PC-3 (cell line): ENCODE measurements at regions of chr14 and their contacts with region 1.

Region 1: GRCh38 chr14:71711619-71712018 is 220.6 kb upstream of the RGS6 start:
- DNase-seq: peak; percentile 62
- ATAC-seq: peak; percentile 90
- H3K4me3 ChIP-seq: no peak overlapping the region
- H3K27ac ChIP-seq: no peak overlapping the region
- H3K4me1 ChIP-seq: peaks cover 20% of the 10 kb centered on the region
- H3K27me3 ChIP-seq: no peaks in the 10 kb centered on the region
- CTCF ChIP-seq: no peak

Region 2: DNA sequence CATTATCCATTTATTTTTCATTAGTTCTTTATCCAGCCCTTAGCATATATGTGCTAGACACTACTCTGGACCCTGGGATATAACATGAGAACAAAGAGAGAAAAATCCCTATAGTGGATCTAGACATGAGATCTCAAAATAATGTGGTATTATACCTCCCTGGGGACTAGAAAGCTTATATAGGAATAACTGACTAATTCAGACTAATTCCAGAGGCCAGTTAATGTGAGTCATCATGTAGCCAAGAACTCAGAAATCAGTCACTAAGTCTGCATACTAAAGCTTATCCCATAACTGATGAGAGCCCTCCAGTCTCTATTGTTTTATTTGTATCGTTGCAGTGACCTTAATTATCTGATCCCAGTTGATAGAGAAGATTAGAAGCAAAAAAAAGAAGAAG is 46.5 kb before region 1 on chr14:
- CTCF ChIA-PET with region 1: no interaction called
- POLR2A ChIA-PET with region 1: interaction called, 14 read pairs
- intact Hi-C with region 1: no loop called
- DNase-seq: peak; percentile 66
- ATAC-seq: peak; percentile 98
- H3K4me3 ChIP-seq: no peak overlapping the region
- H3K27ac ChIP-seq: no peak overlapping the region; the same call in 1 of the 2 replicates
- H3K4me1 ChIP-seq: peaks cover 13% of the 10 kb centered on the region
- H3K27me3 ChIP-seq: no peaks in the 10 kb centered on the region
- CTCF ChIP-seq: no peak